ENCODE measurements at regions of chr7 and their contacts with region 1.

Region 1: DNA sequence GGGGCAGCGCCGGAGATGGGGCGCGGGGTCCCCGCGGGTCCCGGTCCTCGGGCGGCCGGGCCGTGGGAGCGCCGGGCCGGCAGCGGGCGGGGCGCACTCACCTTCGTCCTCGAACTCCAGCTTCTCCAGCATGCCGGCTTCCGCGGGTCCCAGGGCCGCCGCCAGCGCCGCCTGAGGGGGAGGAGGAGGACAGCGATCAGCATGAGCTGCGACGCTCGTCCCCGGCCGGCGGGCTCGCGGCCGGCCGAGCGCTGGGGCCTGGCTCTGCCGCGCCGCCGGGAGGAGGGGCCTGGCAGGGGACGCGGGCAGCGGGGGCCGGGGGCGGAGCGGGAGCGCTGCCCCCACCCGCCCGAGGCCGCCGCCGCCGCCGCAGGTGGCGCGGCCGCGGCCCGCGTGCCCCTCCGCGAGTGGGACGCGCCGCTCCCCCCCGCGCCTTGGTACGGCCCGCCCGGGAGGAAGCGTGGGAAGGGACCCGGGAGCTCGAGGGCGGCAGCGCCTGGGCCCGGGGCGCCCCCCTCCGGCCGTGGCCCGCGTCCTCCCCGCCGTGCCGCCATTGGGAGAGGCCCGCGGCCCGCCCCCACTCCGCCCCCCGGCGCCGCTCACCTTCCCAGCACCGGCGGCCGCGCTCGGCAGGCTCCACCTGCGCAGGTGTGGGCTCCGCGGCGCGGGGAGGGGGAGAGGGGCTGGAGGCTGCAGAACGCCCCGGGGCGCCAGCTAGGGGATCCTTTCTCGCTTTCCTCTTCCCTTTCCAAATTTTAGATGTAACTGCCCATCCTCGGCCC is 112.5 kb upstream of the RHEB start:
- DNase-seq: peak; percentile 68
- H3K4me3 ChIP-seq: peak overlapping the region; percentile 97 to 100 (median 99)
- H3K27ac ChIP-seq: peak overlapping the region; percentile 66
- H3K4me1 ChIP-seq: peaks cover 22% of the 10 kb centered on the region
- H3K27me3 ChIP-seq: no peaks in the 10 kb centered on the region
- CTCF ChIP-seq: peak; percentile 33 to 40
- POLR2A ChIP-seq: peak; percentile 74

Region 2: DNA sequence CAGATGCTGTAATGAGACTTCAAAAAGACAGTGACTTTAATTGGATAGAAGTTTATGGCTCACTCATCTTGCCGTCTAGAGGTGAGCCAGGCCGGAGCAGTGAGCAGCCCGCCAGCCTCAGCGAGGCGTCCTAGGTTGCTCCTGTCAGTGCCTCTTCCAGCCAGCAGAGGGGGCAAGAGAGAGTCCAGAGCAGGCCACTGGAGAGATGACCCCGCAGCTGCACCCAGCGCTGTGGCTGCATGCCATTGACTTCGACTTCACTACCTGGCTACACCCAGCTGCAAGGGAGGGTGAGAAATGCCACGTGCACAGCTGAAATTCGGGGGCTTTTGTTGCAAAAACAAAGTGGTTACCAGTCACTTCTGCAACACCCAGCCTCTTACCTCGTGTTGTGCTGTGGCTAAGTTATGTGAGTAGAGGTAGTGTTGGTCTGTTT is 264.0 kb before region 1 on chr7:
- CTCF ChIA-PET with region 1: no interaction called
- POLR2A ChIA-PET with region 1: no interaction called
- dilution Hi-C with region 1: no loop called
- intact Hi-C with region 1: loop called (anchors 1 kb)
- DNase-seq: peak; percentile 71
- H3K4me3 ChIP-seq: no peak overlapping the region
- H3K27ac ChIP-seq: no peak overlapping the region
- H3K4me1 ChIP-seq: no peaks in the 10 kb centered on the region
- H3K27me3 ChIP-seq: no peaks in the 10 kb centered on the region
- CTCF ChIP-seq: peak; percentile 97 to 99
- POLR2A ChIP-seq: no peak

Region 3: DNA sequence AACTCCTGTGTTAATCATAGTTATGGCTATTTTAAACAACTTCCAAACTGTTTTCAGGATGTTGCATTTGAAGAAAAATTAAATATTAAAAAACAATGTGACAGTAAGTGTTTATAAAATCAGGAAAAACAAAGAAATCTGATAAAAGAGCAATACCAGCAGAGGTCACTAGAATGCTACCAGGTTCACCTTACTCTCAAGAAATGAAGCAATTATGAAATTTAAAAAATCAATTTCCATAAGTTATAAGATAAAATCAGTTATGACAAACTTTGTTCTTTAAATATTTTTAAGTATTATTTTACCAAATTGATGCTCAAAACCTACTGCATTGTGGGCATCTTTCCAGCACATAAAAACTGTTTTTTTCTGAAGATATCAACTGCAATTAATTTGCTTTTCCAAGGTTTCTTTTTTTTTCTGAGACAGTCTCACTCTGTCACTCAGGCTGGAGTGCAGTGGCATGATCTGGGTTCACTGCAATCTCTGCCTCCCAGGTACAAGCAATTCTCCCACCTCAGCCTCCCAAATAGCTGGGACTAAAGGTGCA is 61.7 kb before region 1 on chr7:
- CTCF ChIA-PET with region 1: interaction called, 24 read pairs
- POLR2A ChIA-PET with region 1: no interaction called
- dilution Hi-C with region 1: no loop called
- intact Hi-C with region 1: loop called (anchors 1 kb)
- DNase-seq: peak; percentile 61
- H3K4me3 ChIP-seq: no peak overlapping the region
- H3K27ac ChIP-seq: no peak overlapping the region
- H3K4me1 ChIP-seq: no peaks in the 10 kb centered on the region
- H3K27me3 ChIP-seq: no peaks in the 10 kb centered on the region
- CTCF ChIP-seq: peak; percentile 37
- POLR2A ChIP-seq: no peak

Region 4: DNA sequence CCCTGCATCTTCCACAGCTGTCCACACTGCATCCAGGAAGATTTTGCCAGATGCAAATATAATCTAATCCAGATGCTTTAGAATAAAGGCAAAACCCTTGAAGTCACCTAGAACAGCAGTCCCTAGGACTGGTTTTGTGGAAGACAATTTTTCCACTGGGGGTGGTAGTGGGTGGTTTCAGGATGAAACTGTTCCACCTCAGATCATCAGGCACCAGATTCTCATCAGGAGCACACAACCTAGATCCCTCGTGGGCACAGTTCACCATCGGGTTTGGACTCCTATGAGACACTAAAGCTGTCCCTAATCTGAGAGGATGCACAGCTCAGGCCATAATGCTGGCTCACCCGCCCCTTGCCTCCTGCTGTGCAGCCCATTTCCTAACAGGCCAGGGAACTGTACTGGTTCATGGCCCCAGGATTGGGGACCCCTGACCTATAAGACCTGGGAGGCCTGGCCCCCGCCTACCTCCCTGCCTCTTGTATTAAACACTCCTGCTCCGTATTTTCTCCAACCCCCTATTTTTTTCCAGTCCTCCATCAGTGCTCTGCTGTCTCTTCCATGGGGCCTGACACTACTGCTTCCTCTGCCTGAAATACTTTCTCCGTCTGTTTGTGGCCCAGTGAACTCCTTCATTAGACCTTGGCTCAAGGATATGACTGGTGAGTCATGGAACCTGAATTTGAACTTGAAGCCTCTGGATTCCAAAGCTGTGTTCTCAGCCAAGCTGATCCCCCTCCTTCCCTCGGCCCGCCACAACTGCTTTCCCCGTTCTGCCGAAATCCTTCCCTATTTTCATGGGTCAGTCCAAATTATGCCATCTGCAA is 32.5 kb before region 1 on chr7:
- CTCF ChIA-PET with region 1: interaction called, 13 read pairs
- POLR2A ChIA-PET with region 1: no interaction called
- dilution Hi-C with region 1: no loop called
- intact Hi-C with region 1: no loop called
- DNase-seq: peak; percentile 85
- H3K4me3 ChIP-seq: peak overlapping the region in 1 of 3 experiments; percentile 14
- H3K27ac ChIP-seq: peak overlapping the region; percentile 88
- H3K4me1 ChIP-seq: peaks cover 42% of the 10 kb centered on the region
- H3K27me3 ChIP-seq: no peaks in the 10 kb centered on the region
- CTCF ChIP-seq: no peak
- POLR2A ChIP-seq: no peak

Region 5: GRCh38 chr7:151705636-151706276 is 73.6 kb after region 1 on chr7:
- CTCF ChIA-PET with region 1: interaction called, 17 read pairs
- POLR2A ChIA-PET with region 1: no interaction called
- dilution Hi-C with region 1: no loop called
- intact Hi-C with region 1: loop called (anchors 1 kb)
- DNase-seq: peak; percentile 60
- H3K4me3 ChIP-seq: no peak overlapping the region
- H3K27ac ChIP-seq: no peak overlapping the region
- H3K4me1 ChIP-seq: no peaks in the 10 kb centered on the region
- H3K27me3 ChIP-seq: no peaks in the 10 kb centered on the region
- CTCF ChIP-seq: peak; percentile 48 to 61
- POLR2A ChIP-seq: no peak

Region 6: DNA sequence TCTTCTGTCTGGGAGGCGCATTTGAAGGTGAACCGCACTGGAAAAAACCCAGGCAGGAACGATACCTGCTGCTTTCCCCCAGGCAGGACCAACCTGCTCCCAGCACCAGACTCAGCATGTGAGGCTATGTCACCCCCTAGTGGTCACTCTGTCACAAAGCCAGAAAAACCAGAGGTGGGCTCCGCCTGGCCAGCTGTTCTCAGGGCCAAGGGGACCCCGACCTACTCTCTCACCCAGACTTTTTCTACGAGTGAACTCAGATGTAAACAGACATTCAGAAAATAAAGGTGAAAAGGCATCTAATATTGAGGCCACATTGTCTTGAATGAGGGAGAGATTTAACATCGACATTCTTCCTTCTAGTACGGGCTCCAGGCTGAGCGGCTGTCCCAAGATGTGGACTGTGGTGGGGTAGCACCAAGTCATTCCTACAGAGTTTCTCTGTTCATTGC is 127.5 kb after region 1 on chr7:
- CTCF ChIA-PET with region 1: interaction called, 50 read pairs
- POLR2A ChIA-PET with region 1: no interaction called
- dilution Hi-C with region 1: no loop called
- intact Hi-C with region 1: loop called (anchors 1 kb)
- DNase-seq: peak; percentile 60
- H3K4me3 ChIP-seq: no peak overlapping the region
- H3K27ac ChIP-seq: no peak overlapping the region
- H3K4me1 ChIP-seq: peaks cover 17% of the 10 kb centered on the region
- H3K27me3 ChIP-seq: peaks cover 0 to 1% of the 10 kb centered on the region in 2 experiments
- CTCF ChIP-seq: peak; percentile 80 to 86
- POLR2A ChIP-seq: no peak

Region 7: GRCh38 chr7:152527610-152528032 is 895.5 kb after region 1 on chr7:
- CTCF ChIA-PET with region 1: no interaction called
- POLR2A ChIA-PET with region 1: no interaction called
- dilution Hi-C with region 1: no loop called
- intact Hi-C with region 1: no loop called
- DNase-seq: no peak
- H3K4me3 ChIP-seq: no peak overlapping the region
- H3K27ac ChIP-seq: no peak overlapping the region
- H3K4me1 ChIP-seq: no peaks in the 10 kb centered on the region
- H3K27me3 ChIP-seq: no peaks in the 10 kb centered on the region
- CTCF ChIP-seq: no peak
- POLR2A ChIP-seq: no peak

Measured in endothelial cell of umbilical vein (primary cell).